Activated B cell treated with CpG ODN at 0.5 μM for 24 hours (primary cell): ENCODE measurements at regions of chrX and their contacts with region 1.

Region 1: GRCh38 chrX:153971450-153972367 is at the start of gene HCFC1:
- DNase-seq: peak; percentile 81
- ATAC-seq: peak; percentile 48
- H3K4me3 Mint-ChIP-seq: peak within 1 kb of the TSS; percentile 100
- H3K27ac Mint-ChIP-seq: peak within 1 kb of the TSS; percentile 100
- H3K4me1 Mint-ChIP-seq: peaks cover 44% of the 10 kb centered on the region
- H3K27me3 Mint-ChIP-seq: no peaks in the 10 kb centered on the region
- CTCF ChIP-seq: no peak
- total RNA-seq, gene HCFC1: 72.5 and 79.4 TPM in 2 replicates

Region 2: DNA sequence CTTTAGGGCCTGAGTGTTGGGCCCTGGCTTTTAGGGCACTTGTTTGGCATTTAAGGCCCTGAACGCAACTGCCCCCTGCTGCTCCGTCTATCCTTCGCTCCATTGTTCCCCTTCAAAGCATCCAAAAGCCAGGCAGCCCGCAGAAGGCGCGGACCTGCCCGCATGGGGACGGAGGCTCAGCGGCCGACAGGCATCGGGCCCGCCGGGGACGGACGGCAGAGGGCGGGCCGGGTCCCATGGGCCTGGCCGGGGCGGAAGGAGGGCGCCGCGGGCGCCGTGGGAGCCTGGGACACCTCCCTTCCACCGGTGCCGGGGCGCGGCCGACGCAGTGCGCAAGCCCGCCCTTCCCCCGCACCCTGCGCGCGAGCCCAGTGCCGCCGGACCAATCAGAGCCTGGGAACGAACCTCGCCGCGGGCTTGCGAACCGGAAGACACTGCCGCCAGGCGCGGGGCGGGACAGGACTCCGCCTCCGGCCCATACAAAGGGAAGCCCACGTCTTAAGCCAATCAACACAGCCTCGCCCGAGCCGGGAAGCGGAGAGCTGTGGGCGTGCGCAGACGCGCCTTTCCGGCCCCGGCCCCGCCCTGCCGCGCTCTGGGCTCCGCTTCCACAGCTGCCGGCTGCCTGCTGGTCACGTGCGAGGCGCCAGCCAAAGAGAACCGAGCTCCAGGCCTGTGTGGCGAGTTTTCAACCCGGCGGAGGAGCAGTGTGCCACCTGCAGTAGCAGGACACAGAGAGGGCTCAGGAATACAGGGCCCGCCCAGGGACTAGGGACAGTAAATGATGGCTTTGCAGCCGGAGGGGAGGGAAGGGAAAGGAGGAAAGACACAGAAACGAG is 43.6 kb before region 1 on chrX:
- CTCF ChIA-PET with region 1: interaction called, 3 read pairs
- POLR2A ChIA-PET with region 1: interaction called, 114 read pairs
- intact Hi-C with region 1: loop called (anchors 1 kb)
- DNase-seq: peak; percentile 83
- ATAC-seq: peak; percentile 66
- H3K4me3 Mint-ChIP-seq: peak overlapping the region; percentile 87
- H3K27ac Mint-ChIP-seq: peak overlapping the region; percentile 96
- H3K4me1 Mint-ChIP-seq: peaks cover 46% of the 10 kb centered on the region
- H3K27me3 Mint-ChIP-seq: no peaks in the 10 kb centered on the region
- CTCF ChIP-seq: no peak

Region 3: DNA sequence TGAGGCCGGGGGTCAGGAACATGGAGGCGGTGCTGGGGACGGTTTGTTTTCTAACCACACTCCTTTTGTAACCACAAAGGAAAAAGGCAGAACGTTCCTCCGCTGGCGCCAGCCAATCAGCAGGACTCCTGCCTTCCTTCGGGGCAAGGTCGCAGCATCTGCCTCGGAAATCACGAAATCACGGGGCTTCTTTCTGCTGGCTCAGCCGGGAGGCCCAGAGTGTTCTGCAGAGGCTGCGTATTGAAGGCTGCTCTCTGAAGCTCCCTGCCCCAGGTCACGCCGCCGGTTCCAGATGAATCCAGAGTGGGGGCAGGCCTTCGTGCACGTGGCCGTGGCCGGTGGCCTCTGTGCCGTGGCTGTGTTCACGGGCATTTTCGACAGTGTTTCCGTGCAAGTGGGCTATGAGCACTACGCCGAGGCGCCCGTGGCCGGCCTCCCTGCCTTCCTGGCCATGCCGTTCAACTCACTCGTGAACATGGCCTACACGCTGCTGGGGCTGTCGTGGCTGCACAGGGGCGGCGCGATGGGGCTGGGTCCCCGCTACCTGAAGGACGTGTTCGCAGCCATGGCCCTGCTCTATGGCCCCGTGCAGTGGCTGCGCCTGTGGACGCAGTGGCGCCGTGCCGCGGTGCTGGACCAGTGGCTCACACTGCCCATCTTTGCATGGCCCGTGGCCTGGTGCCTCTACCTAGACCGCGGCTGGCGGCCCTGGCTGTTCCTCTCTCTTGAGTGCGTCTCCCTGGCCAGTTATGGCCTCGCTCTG is 10.2 kb after region 1 on chrX:
- CTCF ChIA-PET with region 1: no interaction called
- POLR2A ChIA-PET with region 1: interaction called, 18 read pairs
- intact Hi-C with region 1: loop called (anchors 1 kb)
- DNase-seq: no peak
- ATAC-seq: no peak
- H3K4me3 Mint-ChIP-seq: peak overlapping the region; percentile 55
- H3K27ac Mint-ChIP-seq: peak overlapping the region; percentile 92
- H3K4me1 Mint-ChIP-seq: peaks cover 55% of the 10 kb centered on the region
- H3K27me3 Mint-ChIP-seq: no peaks in the 10 kb centered on the region
- CTCF ChIP-seq: no peak

Region 4: DNA sequence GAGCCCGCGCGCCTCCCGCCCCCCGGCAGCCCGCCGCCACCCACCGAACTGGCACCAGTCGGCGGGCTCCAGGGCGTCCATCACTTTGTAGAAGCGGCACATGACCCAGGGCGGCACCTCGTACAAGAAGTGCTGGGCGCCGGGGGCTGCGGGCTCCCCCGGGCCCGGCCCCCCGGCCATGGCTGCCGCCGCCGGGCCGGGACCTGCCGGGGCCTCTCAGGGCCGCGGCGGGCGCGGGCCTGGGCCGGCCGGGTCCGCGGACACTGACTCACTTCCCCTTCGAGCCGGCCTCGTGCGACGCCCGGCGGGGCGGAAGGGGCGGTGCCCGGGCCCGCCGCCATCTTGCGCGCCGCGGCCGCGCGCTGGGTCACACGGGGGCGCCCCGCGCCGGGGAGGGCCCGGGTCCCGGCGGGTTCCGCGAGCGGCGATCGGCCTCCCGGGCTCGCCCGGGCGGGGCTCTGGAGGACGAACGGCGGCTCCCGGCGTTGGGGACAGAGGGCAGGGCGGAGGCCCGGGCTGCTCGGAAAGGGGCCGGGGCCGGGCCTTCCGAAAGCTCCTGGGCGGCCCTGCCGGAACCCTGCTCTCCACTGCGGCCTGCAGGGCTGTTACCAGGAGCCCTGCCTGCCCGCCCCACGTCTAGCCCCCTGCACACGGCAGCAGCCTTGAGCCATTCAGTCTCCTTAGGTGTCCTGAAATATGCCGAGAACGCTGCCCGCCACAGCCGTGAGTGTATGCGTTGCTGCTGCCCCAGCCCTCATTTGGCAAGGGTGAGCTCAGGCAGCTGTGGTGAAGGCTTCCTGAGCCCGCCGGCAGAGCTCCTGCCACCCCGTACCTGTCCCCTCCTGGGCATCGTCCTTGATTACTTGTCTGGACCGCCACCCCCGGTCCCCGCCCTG is 48.2 kb after region 1 on chrX and contains the start of gene IRAK1:
- CTCF ChIA-PET with region 1: interaction called, 3 read pairs
- POLR2A ChIA-PET with region 1: interaction called, 36 read pairs
- intact Hi-C with region 1: loop called (anchors 1 kb)
- DNase-seq: peak; percentile 68
- ATAC-seq: peak; percentile 78
- H3K4me3 Mint-ChIP-seq: peak within 1 kb of the TSS; percentile 86
- H3K27ac Mint-ChIP-seq: peak within 1 kb of the TSS; percentile 87
- H3K4me1 Mint-ChIP-seq: peaks cover 25% of the 10 kb centered on the region
- H3K27me3 Mint-ChIP-seq: no peaks in the 10 kb centered on the region
- CTCF ChIP-seq: no peak
- total RNA-seq, gene IRAK1: 134 and 146 TPM in 2 replicates

Region 5: DNA sequence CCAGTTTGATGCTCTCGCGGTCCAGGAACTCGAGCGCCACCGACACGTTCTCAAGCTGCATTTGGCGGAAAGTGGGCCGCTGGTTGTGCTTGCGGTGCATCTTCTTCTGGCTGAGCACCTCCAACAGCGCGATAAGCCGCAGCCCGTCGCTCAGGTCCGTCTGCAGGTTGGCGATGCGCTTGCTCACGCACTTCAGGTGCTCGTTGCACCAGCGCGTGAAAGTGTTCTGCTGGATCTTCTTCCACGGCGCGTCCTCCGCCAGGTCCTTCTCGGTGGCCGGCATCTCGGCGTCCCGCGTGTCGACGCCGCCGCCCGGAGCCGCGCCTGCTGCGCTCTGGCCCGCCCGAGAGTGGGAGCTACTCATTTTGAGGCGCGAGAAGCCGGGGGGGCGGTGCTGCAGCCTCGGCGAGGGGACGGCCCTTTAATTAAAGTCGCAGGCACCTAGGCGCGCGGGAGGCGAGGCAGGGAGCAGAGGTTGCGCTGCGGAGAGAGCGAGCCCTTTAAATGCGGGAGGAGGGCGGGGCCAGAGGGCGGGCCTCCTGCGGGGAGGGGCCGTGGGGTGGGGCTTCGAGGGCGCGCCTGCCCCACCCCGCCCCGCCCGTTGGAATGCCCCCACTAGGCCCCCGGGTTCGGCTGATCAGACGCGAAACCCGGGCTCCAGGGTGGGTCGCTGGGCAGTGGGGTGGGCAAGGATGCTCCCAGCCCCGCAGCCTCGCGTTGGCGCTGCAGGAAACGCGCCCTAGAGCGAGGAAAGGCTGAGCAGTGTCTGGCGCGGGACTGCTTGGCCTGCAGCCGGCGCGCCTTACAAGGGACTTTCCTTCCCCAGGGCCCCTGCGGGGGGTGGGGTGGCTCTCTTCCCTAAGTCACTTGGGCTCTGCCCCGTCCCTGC is 399.4 kb after region 1 on chrX:
- CTCF ChIA-PET with region 1: no interaction called
- POLR2A ChIA-PET with region 1: interaction called, 4 read pairs
- intact Hi-C with region 1: loop called (anchors 2 kb)
- DNase-seq: peak; percentile 76
- ATAC-seq: peak; percentile 64
- H3K4me3 Mint-ChIP-seq: peak overlapping the region; percentile 84
- H3K27ac Mint-ChIP-seq: peak overlapping the region; percentile 69
- H3K4me1 Mint-ChIP-seq: peaks cover 34% of the 10 kb centered on the region
- H3K27me3 Mint-ChIP-seq: no peaks in the 10 kb centered on the region
- CTCF ChIP-seq: no peak

Region 6: GRCh38 chrX:155148724-155149537 is 1177.2 kb after region 1 on chrX:
- CTCF ChIA-PET with region 1: no interaction called
- POLR2A ChIA-PET with region 1: no interaction called
- intact Hi-C with region 1: no loop called
- DNase-seq: no peak
- ATAC-seq: no peak
- H3K4me3 Mint-ChIP-seq: no peak overlapping the region
- H3K27ac Mint-ChIP-seq: no peak overlapping the region
- H3K4me1 Mint-ChIP-seq: no peaks in the 10 kb centered on the region
- H3K27me3 Mint-ChIP-seq: peaks cover 2% of the 10 kb centered on the region
- CTCF ChIP-seq: no peak